Caco-2 (cell line): ENCODE measurements at regions of chr12 and their contacts with region 1.

Region 1: GRCh38 chr12:106841510-106842302 is 67.2 kb downstream of the RIC8B start:
- DNase-seq: peak in 1 of 2 experiments; percentile 57
- H3K4me3 ChIP-seq: no peak overlapping the region
- H3K4me3 Mint-ChIP-seq: no peak overlapping the region
- H3K27ac Mint-ChIP-seq: no peak overlapping the region
- H3K4me1 ChIP-seq: peaks cover 5% of the 10 kb centered on the region; the same call in 1 of the 2 replicates
- H3K4me1 Mint-ChIP-seq: peaks cover 7% of the 10 kb centered on the region
- H3K27me3 ChIP-seq: no peaks in the 10 kb centered on the region
- H3K27me3 Mint-ChIP-seq: no peaks in the 10 kb centered on the region
- CTCF ChIP-seq: peak; percentile 54 to 60

Region 2: GRCh38 chr12:106357549-106358395 is 483.9 kb before region 1 on chr12 and contains the start of gene POLR3B:
- CTCF ChIA-PET with region 1: interaction called, 8 read pairs
- POLR2A ChIA-PET with region 1: interaction called, 3 read pairs
- intact Hi-C with region 1: loop called (anchors 1 kb)
- DNase-seq: peak; percentile 94
- H3K4me3 ChIP-seq: peak within 1 kb of the TSS; percentile 64
- H3K4me3 Mint-ChIP-seq: no peak within 1 kb of the TSS
- H3K27ac Mint-ChIP-seq: peak within 1 kb of the TSS; percentile 94
- H3K4me1 ChIP-seq: peaks cover 29% of the 10 kb centered on the region
- H3K4me1 Mint-ChIP-seq: peaks cover 13% of the 10 kb centered on the region
- H3K27me3 ChIP-seq: no peaks in the 10 kb centered on the region
- H3K27me3 Mint-ChIP-seq: no peaks in the 10 kb centered on the region
- CTCF ChIP-seq: peak; percentile 82 to 91
- total RNA-seq, gene POLR3B: 13.7 and 13.9 TPM in 2 replicates

Region 3: DNA sequence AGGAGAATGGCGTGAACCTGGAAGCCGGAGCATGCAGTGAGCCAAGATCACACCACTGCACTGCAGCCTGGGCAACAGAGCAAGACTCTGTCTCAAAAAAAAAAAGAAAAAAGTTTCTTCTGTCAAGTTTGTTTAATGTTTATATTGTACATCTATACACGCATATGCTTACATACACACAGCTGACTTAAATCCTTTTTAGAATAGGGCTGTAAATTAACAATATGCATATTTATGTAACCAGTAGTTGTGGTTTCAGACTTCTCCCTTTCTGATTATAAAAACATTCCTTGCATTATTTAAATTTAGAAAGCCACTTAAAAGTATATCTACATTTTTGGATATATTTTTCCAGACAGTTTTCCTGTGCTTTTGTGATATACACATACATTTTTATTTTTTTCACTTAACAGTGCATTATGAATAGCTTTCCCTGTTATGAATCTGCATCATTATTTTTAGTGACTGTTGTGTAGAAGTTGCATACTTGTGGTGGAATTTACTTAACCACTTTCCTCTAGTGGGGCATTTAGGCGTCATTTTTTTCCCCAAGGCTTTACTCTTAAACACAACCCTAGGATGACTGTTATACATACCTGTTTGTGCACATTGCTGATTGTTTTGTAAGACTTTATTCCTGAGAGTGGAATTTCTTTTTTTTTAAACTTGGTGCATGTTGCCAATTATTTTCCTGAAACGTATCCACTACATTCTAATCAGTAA is 454.7 kb before region 1 on chr12:
- CTCF ChIA-PET with region 1: no interaction called
- POLR2A ChIA-PET with region 1: no interaction called
- intact Hi-C with region 1: loop called (anchors 1 kb)
- DNase-seq: no peak
- H3K4me3 ChIP-seq: no peak overlapping the region
- H3K4me3 Mint-ChIP-seq: no peak overlapping the region
- H3K27ac Mint-ChIP-seq: no peak overlapping the region
- H3K4me1 ChIP-seq: no peaks in the 10 kb centered on the region
- H3K4me1 Mint-ChIP-seq: peaks cover 8% of the 10 kb centered on the region
- H3K27me3 ChIP-seq: no peaks in the 10 kb centered on the region
- H3K27me3 Mint-ChIP-seq: no peaks in the 10 kb centered on the region
- CTCF ChIP-seq: no peak

Region 4: GRCh38 chr12:106682592-106683234 is 159.0 kb before region 1 on chr12:
- CTCF ChIA-PET with region 1: no interaction called
- POLR2A ChIA-PET with region 1: no interaction called
- intact Hi-C with region 1: loop called (anchors 1 kb)
- DNase-seq: no peak
- H3K4me3 ChIP-seq: no peak overlapping the region
- H3K4me3 Mint-ChIP-seq: no peak overlapping the region
- H3K27ac Mint-ChIP-seq: no peak overlapping the region
- H3K4me1 ChIP-seq: no peaks in the 10 kb centered on the region
- H3K4me1 Mint-ChIP-seq: peaks cover 6% of the 10 kb centered on the region
- H3K27me3 ChIP-seq: no peaks in the 10 kb centered on the region
- H3K27me3 Mint-ChIP-seq: no peaks in the 10 kb centered on the region
- CTCF ChIP-seq: peak in 1 of 2 experiments; percentile 21

Region 5: DNA sequence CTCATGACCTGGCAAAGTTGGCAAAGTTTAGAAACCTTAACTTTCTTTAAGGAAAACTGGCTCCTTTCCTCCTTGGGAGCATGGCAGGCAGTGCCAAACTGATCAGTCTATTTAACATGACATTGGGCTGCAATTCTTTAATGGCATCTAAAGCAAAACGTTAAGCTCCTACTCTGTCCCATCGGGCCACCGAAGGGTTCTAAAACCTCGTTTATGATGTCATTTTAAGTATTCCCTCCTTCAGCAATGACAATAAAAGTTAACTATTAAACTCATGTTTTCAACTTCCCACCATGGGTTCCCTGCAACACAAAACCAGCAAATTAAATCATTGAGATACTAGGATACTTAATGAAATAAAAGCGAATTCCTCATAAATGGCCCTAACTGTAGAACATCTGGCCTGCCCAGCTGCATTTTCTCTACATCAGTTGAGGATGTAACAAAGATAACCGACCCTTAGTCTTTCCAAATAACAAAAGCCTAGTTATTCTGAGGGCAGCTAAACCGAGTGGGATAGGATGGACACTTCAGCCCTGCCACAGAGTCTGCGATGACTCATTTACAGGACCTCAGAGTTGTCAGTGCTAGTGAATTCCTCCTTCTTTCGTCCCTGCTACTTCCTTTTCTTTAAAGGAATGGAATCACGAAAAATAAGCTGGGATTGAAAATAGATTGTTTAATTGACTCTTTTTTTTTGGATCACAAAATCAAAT is 101.7 kb before region 1 on chr12:
- CTCF ChIA-PET with region 1: interaction called, 12 read pairs
- POLR2A ChIA-PET with region 1: no interaction called
- intact Hi-C with region 1: no loop called
- DNase-seq: no peak
- H3K4me3 ChIP-seq: no peak overlapping the region
- H3K4me3 Mint-ChIP-seq: peak overlapping the region; percentile 19
- H3K27ac Mint-ChIP-seq: no peak overlapping the region
- H3K4me1 ChIP-seq: peaks cover 10% of the 10 kb centered on the region
- H3K4me1 Mint-ChIP-seq: no peaks in the 10 kb centered on the region
- H3K27me3 ChIP-seq: 0 out of 2 replicates have a peak, but pooled peaks cover 1% of the 10 kb centered on the region
- H3K27me3 Mint-ChIP-seq: peaks cover 3% of the 10 kb centered on the region
- CTCF ChIP-seq: no peak

Region 6: GRCh38 chr12:106801830-106802533 is 39.7 kb before region 1 on chr12:
- CTCF ChIA-PET with region 1: no interaction called
- POLR2A ChIA-PET with region 1: no interaction called
- intact Hi-C with region 1: no loop called
- DNase-seq: no peak
- H3K4me3 ChIP-seq: no peak overlapping the region
- H3K4me3 Mint-ChIP-seq: no peak overlapping the region
- H3K27ac Mint-ChIP-seq: no peak overlapping the region
- H3K4me1 ChIP-seq: no peaks in the 10 kb centered on the region
- H3K4me1 Mint-ChIP-seq: no peaks in the 10 kb centered on the region
- H3K27me3 ChIP-seq: no peaks in the 10 kb centered on the region
- H3K27me3 Mint-ChIP-seq: no peaks in the 10 kb centered on the region
- CTCF ChIP-seq: no peak

Region 7: DNA sequence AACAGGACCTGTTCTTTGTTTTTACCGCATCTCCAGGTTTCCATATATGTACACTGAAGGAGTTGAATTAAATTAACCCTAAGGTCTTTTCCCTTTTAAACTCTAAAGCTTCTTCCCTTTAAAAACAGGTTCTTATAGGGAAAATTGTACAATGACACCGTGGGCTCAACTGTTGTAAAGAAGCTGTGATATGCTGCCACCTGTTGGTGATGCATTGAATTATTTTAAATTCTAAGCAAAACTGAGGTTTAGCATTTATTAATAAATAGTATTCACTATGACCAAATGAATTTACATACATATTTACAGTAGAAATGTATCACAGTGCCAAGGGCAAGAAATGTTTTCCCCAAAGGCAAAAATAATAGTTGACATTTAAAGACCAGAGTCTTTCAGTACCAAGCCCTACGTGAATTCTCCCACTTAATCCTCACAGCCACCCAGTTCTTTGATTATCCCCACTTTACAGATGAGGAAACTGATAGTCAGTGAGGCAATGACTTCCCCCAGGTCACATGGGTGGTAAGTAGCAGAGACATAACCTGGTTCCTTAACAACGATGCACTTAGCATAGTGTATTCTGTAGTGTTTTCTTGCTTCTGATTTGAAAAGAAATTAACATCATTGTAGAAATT is 78.3 kb after region 1 on chr12:
- CTCF ChIA-PET with region 1: interaction called, 10 read pairs
- POLR2A ChIA-PET with region 1: no interaction called
- intact Hi-C with region 1: loop called (anchors 2 kb)
- DNase-seq: peak in 1 of 2 experiments; percentile 45
- H3K4me3 ChIP-seq: no peak overlapping the region
- H3K4me3 Mint-ChIP-seq: no peak overlapping the region
- H3K27ac Mint-ChIP-seq: no peak overlapping the region
- H3K4me1 ChIP-seq: no peaks in the 10 kb centered on the region
- H3K4me1 Mint-ChIP-seq: no peaks in the 10 kb centered on the region
- H3K27me3 ChIP-seq: no peaks in the 10 kb centered on the region
- H3K27me3 Mint-ChIP-seq: peaks cover 3% of the 10 kb centered on the region
- CTCF ChIP-seq: peak; percentile 62 to 75